PC-3 (cell line): ENCODE measurements at regions of chr5 and their contacts with region 1.

Region 1: DNA sequence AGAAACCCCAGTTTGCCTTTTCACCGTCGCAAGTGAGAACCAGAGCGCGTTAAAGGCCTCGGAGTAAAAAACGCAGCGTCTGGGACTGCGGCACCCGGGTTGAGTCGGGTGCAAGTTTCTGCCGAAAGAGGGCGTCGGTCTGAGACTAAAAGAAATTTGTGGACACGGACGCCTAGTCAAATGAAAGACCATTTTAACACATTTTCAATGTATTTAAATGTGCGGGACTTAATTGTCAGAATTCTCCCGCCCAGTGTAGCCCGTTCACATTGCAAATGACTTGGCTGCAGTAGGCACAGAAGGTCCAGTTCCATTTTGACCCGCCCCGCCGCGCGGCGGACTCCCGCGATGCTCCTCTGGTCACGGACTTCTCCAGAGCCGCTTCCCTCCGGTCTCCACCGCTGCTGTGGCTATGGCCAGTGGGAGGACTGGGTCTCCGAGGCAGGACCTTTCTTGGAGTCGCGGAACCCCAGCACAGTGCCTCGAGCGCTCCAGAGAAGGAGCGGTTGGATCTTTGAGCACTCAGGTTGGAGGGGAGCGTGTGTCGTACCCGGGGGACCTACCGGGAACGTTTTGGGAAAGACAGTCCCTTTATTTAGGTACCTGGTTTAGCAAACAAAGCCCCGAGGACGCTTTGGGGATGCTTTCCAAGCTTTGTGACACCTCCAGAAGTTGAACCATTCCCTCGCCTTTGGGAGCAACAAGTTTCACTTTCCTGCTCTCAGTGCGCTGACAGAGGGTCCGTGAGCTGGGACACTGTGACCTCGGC is 1.2 kb upstream of the NPR3 start:
- DNase-seq: peak; percentile 79
- ATAC-seq: peak; percentile 57
- H3K4me3 ChIP-seq: peak overlapping the region; percentile 85
- H3K27ac ChIP-seq: peak overlapping the region; percentile 47
- H3K4me1 ChIP-seq: peaks cover 40% of the 10 kb centered on the region
- H3K27me3 ChIP-seq: peaks cover 16% of the 10 kb centered on the region
- CTCF ChIP-seq: peak; percentile 86

Region 2: DNA sequence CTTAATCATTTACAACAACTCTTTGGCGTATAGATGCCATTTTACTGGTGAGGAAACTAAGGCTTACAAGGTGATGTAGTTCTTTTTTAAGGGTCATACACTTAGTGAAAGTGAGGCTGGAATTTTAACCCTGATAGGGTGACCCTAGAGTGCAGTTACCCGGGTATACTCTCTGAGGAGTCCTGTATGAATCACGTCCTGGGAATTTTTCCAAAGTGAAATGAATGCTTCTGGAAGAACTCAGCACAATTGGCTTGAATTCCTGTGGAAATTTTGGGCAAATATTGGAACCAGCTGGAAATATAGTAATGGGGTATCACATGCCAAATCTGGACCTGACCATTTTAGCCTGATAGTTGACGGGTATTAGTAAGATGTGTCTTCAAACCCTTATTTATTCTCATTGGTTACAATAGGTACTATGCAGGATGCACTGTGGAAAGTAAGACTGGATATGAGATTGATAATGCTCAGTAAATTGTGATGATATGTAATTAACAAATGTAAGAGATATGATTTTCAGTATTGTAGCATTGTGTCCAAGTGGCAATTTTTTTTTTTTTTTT is 109.8 kb before region 1 on chr5:
- CTCF ChIA-PET with region 1: no interaction called
- POLR2A ChIA-PET with region 1: no interaction called
- intact Hi-C with region 1: no loop called
- DNase-seq: peak; percentile 93
- ATAC-seq: peak; percentile 92
- H3K4me3 ChIP-seq: no peak overlapping the region
- H3K27ac ChIP-seq: no peak overlapping the region
- H3K4me1 ChIP-seq: peaks cover 15% of the 10 kb centered on the region
- H3K27me3 ChIP-seq: no peaks in the 10 kb centered on the region
- CTCF ChIP-seq: no peak

Region 3: GRCh38 chr5:32642276-32643002 is 67.5 kb before region 1 on chr5:
- CTCF ChIA-PET with region 1: no interaction called
- POLR2A ChIA-PET with region 1: no interaction called
- intact Hi-C with region 1: loop called (anchors 5 kb)
- DNase-seq: peak; percentile 79
- ATAC-seq: peak; percentile 93
- H3K4me3 ChIP-seq: peak overlapping the region; percentile 49
- H3K27ac ChIP-seq: 0 out of 2 replicates have a peak overlapping the region, but pooled peaks have one; percentile 3
- H3K4me1 ChIP-seq: peaks cover 22% of the 10 kb centered on the region
- H3K27me3 ChIP-seq: no peaks in the 10 kb centered on the region
- CTCF ChIP-seq: no peak

Region 4: DNA sequence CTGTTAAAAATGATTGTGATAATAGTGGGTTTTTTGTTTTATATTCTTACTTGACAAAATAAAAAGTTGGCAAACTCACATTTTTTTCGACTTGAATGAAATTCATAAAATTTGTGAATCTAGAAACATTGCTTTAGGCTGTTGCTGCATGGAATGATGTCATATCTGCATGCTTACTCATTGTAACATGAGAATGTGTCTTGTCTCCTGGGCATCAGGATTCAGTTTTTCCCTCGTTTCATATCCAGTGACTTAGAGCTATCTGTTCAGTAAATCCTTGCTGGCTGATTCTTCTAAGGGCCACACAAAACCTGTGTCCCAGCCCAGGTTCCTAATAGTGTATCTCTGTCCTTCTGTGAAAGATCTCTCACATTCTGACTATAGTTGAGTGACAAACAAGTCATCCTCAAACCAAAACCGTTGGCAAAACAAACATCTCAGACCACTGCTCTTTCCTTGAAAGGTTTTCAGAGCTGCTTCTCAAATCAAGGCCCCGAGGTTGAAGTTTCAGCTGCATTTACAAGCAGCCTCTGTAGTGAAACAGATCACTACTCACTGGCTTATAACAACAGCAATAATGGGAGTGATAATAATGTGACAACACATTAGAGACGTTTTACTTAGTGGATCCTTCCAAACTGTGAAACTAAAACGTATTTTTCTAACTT is 96.1 kb after region 1 on chr5:
- CTCF ChIA-PET with region 1: interaction called, 3 read pairs
- POLR2A ChIA-PET with region 1: no interaction called
- intact Hi-C with region 1: loop called (anchors 5 kb)
- DNase-seq: peak; percentile 74
- ATAC-seq: peak; percentile 96
- H3K4me3 ChIP-seq: peak overlapping the region; percentile 48; the same call in 1 of the 2 replicates
- H3K27ac ChIP-seq: peak overlapping the region; percentile 75
- H3K4me1 ChIP-seq: peaks cover 16% of the 10 kb centered on the region
- H3K27me3 ChIP-seq: no peaks in the 10 kb centered on the region
- CTCF ChIP-seq: no peak

Region 5: GRCh38 chr5:33180900-33181299 is 470.9 kb after region 1 on chr5:
- CTCF ChIA-PET with region 1: no interaction called
- POLR2A ChIA-PET with region 1: no interaction called
- intact Hi-C with region 1: loop called (anchors 1 kb)
- DNase-seq: peak; percentile 66
- ATAC-seq: peak; percentile 73
- H3K4me3 ChIP-seq: no peak overlapping the region
- H3K27ac ChIP-seq: no peak overlapping the region
- H3K4me1 ChIP-seq: 0 out of 2 replicates have a peak, but pooled peaks cover 3% of the 10 kb centered on the region
- H3K27me3 ChIP-seq: no peaks in the 10 kb centered on the region
- CTCF ChIP-seq: peak; percentile 84

Region 6: GRCh38 chr5:33423018-33423630 is 713.2 kb after region 1 on chr5:
- CTCF ChIA-PET with region 1: no interaction called
- POLR2A ChIA-PET with region 1: no interaction called
- intact Hi-C with region 1: loop called (anchors 1 kb)
- DNase-seq: peak; percentile 69
- ATAC-seq: peak; percentile 43; the same call in 1 of the 2 replicates
- H3K4me3 ChIP-seq: no peak overlapping the region
- H3K27ac ChIP-seq: no peak overlapping the region
- H3K4me1 ChIP-seq: no peaks in the 10 kb centered on the region
- H3K27me3 ChIP-seq: no peaks in the 10 kb centered on the region
- CTCF ChIP-seq: peak; percentile 73